PC-3 (cell line): ENCODE measurements at regions of chr9 and their contacts with region 1.

Region 1: GRCh38 chr9:128339771-128340690 is at the start of gene SLC27A4:
- DNase-seq: peak; percentile 85
- ATAC-seq: peak; percentile 88
- H3K4me3 ChIP-seq: peak within 1 kb of the TSS; percentile 88
- H3K27ac ChIP-seq: peak within 1 kb of the TSS; percentile 36; the same call in 1 of the 2 replicates
- H3K4me1 ChIP-seq: no peaks in the 10 kb centered on the region
- H3K27me3 ChIP-seq: no peaks in the 10 kb centered on the region
- CTCF ChIP-seq: no peak
- total RNA-seq, gene SLC27A4: 39.1 and 41.1 TPM in 2 replicates

Region 2: GRCh38 chr9:128150594-128151308 is 189.3 kb before region 1 on chr9:
- CTCF ChIA-PET with region 1: no interaction called
- POLR2A ChIA-PET with region 1: no interaction called
- intact Hi-C with region 1: no loop called
- DNase-seq: no peak
- ATAC-seq: no peak
- H3K4me3 ChIP-seq: no peak overlapping the region
- H3K27ac ChIP-seq: peak overlapping the region; percentile 98
- H3K4me1 ChIP-seq: peaks cover 36% of the 10 kb centered on the region
- H3K27me3 ChIP-seq: no peaks in the 10 kb centered on the region
- CTCF ChIP-seq: peak; percentile 43

Region 3: GRCh38 chr9:128322404-128323211 is 17.4 kb before region 1 on chr9 and contains the starts of genes COQ4 and TRUB2:
- CTCF ChIA-PET with region 1: no interaction called
- POLR2A ChIA-PET with region 1: interaction called, 23 read pairs
- intact Hi-C with region 1: loop called (anchors 2 kb)
- DNase-seq: peak; percentile 89
- ATAC-seq: peak; percentile 89
- H3K4me3 ChIP-seq: peak within 1 kb of the TSS; percentile 85
- H3K27ac ChIP-seq: peak within 1 kb of the TSS; percentile 86
- H3K4me1 ChIP-seq: peaks cover 6% of the 10 kb centered on the region; the same call in 1 of the 2 replicates
- H3K27me3 ChIP-seq: no peaks in the 10 kb centered on the region
- CTCF ChIP-seq: no peak
- total RNA-seq, gene COQ4: 28.1 and 31.3 TPM in 2 replicates
- total RNA-seq, gene TRUB2: 24.9 and 32.2 TPM in 2 replicates

Region 4: DNA sequence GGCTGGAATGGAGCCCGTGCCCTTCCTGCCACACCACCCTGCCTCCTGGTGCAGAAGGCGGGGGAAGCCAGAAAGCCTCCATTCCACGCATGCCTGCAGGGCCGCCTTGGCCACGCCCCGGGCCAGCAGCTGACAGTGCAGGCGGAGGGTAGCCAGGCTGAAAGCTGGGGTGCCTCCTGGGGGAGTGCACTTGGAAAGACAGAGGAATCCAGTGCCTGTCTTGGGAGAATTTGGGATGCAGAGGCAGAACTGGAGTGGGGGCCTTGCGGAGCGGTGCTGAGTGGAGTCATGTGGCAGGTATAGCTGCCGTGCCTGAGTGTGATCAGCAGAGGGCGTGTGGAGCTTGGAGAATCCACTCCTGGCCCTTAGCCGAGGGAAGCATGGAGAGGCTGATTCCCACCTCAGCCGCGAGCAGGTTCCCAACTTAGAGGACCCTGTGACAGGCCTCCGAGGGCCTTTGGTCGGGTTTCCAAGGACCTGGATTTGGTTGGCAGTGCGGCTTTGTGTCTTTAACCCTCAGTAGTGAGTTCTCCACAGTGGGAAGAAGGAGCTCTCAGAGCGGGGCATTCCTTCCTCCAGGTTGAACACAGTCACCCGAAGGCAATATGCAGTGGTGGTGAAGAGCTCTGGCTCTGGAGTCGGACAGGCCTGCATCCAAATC is 22.1 kb after region 1 on chr9:
- CTCF ChIA-PET with region 1: interaction called, 10 read pairs
- POLR2A ChIA-PET with region 1: no interaction called
- intact Hi-C with region 1: no loop called
- DNase-seq: peak; percentile 79
- ATAC-seq: peak; percentile 89
- H3K4me3 ChIP-seq: peak overlapping the region; percentile 64
- H3K27ac ChIP-seq: no peak overlapping the region
- H3K4me1 ChIP-seq: peaks cover 12% of the 10 kb centered on the region
- H3K27me3 ChIP-seq: no peaks in the 10 kb centered on the region
- CTCF ChIP-seq: peak; percentile 80